PC-3 (cell line): ENCODE measurements at regions of chr10 and their contacts with region 1.

Region 1: GRCh38 chr10:126387023-126387921 is 1.0 kb downstream of the ADAM12 start:
- DNase-seq: peak; percentile 73
- ATAC-seq: peak; percentile 71
- H3K4me3 ChIP-seq: peak overlapping the region; percentile 73
- H3K27ac ChIP-seq: peak overlapping the region; percentile 12; the same call in 1 of the 2 replicates
- H3K4me1 ChIP-seq: peaks cover 25% of the 10 kb centered on the region
- H3K27me3 ChIP-seq: no peaks in the 10 kb centered on the region
- CTCF ChIP-seq: peak; percentile 76

Region 2: DNA sequence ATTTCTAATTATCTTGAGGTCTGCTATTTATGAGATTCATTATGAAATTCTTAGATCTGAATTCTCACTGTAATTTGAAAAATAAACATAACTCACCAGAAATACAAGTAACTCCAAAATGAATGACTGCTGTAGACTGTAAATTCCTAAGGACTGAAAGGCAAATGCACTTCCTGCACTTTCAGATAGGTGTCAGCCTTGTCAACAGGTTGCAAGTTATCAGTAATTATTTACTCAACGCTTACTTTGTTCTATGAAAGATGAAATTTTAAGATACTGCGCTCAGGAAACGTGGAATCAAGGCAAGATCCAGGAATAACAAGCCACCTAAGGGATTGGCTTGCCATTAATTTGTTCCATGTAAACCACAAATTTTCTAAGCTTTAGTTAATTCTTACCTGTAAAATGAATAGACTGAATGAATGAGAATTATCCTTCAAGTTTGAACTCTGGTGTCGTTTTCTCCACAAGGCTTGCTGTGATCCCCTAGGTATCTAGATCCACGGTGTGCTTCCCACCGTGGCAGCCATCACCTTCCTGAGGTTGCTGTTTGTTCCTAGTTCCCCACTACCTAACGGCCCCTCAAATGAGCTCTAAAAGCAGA is 518.8 kb before region 1 on chr10:
- CTCF ChIA-PET with region 1: no interaction called
- POLR2A ChIA-PET with region 1: no interaction called
- intact Hi-C with region 1: loop called (anchors 5 kb)
- DNase-seq: peak; percentile 74
- ATAC-seq: peak; percentile 67
- H3K4me3 ChIP-seq: no peak overlapping the region
- H3K27ac ChIP-seq: no peak overlapping the region
- H3K4me1 ChIP-seq: no peaks in the 10 kb centered on the region
- H3K27me3 ChIP-seq: no peaks in the 10 kb centered on the region
- CTCF ChIP-seq: peak; percentile 90

Region 3: DNA sequence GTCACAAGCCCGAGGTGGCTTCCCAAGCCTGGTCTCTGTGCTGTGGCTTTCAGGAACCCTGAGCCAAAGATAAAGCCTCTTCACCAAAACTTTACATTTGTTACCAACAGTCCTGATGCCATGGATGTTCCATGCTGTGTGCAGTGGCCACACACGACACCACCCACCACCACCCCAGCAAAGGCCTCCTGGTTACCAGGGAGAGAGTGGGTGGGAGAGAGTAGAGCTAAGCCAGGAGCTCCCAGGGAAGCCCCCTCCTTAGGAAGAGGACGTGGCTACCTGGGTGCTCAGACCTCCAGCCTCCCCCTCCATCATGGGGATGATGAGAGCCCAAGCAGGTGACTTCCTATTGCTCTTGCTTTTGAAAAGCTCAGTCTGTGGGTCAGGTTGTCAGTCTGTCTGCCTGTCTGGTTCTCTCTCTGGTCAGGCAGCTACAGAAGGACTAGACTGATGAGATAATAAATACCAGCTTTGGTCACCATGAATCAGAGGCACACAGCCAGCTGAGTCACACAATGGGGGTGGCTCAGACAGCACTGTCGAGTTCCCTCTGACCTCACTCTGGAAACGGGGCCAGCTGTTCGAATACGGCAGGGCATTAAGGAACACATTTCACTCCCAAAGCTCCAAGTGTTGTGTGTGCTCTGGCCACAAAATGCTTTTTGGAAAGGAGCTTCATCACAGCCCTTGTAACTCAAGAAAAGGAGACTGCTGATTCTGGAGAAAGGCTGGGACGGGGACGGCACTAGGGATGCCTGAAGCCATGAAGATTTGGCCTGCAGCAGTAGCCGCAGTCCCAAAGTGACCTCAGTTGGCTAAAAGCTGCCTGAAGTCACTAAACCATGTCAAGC is 324.9 kb before region 1 on chr10:
- CTCF ChIA-PET with region 1: no interaction called
- POLR2A ChIA-PET with region 1: no interaction called
- intact Hi-C with region 1: loop called (anchors 10 kb)
- DNase-seq: peak; percentile 95
- ATAC-seq: peak; percentile 66
- H3K4me3 ChIP-seq: peak overlapping the region; percentile 5; the same call in 1 of the 2 replicates
- H3K27ac ChIP-seq: peak overlapping the region; percentile 98
- H3K4me1 ChIP-seq: peaks cover 81% of the 10 kb centered on the region
- H3K27me3 ChIP-seq: no peaks in the 10 kb centered on the region
- CTCF ChIP-seq: no peak

Region 4: DNA sequence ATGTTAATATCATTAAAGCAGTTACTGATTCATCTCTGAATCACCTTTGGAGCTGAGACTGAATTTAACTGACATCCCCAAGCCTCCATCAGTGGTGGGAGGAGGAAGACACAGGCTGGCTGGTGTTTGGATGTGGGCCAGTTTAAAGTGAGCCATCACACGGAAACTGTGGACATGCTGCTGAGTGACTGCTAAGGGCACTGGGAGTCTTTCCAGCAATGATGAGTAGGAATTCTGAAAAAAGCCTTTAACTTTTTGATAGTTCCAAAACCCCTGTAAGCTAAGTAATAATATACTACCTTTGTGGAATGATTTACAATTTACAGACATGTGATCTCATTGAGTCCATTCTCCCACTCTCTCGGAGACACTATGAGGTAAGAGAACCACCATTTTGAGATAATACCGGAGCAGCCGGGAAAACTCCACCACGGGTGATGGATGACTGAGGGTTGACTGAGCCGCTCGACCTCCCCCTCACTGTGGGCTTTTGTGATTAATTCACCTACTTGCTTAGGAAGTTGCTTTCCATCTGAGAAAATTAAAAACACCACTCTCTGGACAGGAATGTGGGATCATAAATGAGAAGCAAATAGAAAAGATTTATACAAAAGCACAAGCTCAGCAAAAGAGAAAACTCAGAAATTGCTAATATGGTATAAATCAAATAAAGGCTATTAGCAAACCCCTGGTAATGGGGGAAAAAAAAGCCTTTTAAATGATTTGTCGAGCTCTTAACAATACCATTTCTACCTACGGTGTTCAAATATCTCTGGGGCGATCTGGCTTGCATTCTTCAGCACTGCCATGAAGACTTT is 296.2 kb before region 1 on chr10:
- CTCF ChIA-PET with region 1: no interaction called
- POLR2A ChIA-PET with region 1: no interaction called
- intact Hi-C with region 1: loop called (anchors 5 kb)
- DNase-seq: peak; percentile 94
- ATAC-seq: peak; percentile 88
- H3K4me3 ChIP-seq: peak overlapping the region; percentile 36; the same call in 1 of the 2 replicates
- H3K27ac ChIP-seq: peak overlapping the region; percentile 98
- H3K4me1 ChIP-seq: peaks cover 56% of the 10 kb centered on the region
- H3K27me3 ChIP-seq: no peaks in the 10 kb centered on the region
- CTCF ChIP-seq: no peak

Region 5: GRCh38 chr10:126302826-126303665 is 84.2 kb before region 1 on chr10:
- CTCF ChIA-PET with region 1: no interaction called
- POLR2A ChIA-PET with region 1: no interaction called
- intact Hi-C with region 1: loop called (anchors 5 kb)
- DNase-seq: peak; percentile 4
- ATAC-seq: peak; percentile 38; the same call in 1 of the 2 replicates
- H3K4me3 ChIP-seq: no peak overlapping the region
- H3K27ac ChIP-seq: no peak overlapping the region
- H3K4me1 ChIP-seq: no peaks in the 10 kb centered on the region
- H3K27me3 ChIP-seq: no peaks in the 10 kb centered on the region
- CTCF ChIP-seq: peak; percentile 41

Region 6: DNA sequence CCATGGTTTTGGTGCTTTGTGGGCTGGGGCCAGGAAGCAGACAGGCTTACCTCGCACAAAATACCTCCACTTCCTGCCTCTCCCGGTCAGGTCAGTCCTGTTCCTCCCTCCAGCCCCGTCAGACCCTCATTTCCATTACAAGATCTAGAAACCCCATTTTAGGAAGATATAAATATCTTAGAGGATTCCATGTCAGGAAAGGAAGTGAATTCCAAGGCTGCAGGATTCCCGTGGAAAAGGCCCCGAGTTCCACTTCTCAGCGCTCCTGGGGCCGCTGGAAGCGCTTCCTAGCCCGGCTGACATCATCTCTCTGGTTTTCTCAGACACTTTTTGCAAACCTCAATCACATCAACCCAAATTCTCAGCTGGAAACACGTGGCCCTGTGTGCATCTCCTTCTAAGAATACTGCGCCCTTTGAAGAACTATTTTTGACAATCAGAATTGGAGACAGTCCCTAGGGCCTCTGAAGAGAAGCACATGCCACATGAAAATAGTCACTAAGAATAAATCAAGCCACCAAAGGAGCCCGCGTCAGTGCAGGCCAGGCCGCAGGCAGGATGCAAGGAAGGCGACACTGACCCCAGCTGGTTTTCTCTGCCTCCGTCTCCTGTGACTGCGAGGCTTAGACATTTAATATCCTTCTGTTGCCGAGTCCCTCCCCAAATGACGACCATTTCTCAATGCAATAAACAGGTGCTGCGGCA is 88.8 kb after region 1 on chr10:
- CTCF ChIA-PET with region 1: no interaction called
- POLR2A ChIA-PET with region 1: no interaction called
- intact Hi-C with region 1: no loop called
- DNase-seq: no peak
- ATAC-seq: no peak
- H3K4me3 ChIP-seq: no peak overlapping the region
- H3K27ac ChIP-seq: no peak overlapping the region
- H3K4me1 ChIP-seq: peaks cover 5% of the 10 kb centered on the region
- H3K27me3 ChIP-seq: no peaks in the 10 kb centered on the region
- CTCF ChIP-seq: no peak

Region 7: GRCh38 chr10:126504063-126504739 is 116.9 kb after region 1 on chr10:
- CTCF ChIA-PET with region 1: interaction called, 3 read pairs
- POLR2A ChIA-PET with region 1: no interaction called
- intact Hi-C with region 1: loop called (anchors 2 kb)
- DNase-seq: peak; percentile 84
- ATAC-seq: peak; percentile 85
- H3K4me3 ChIP-seq: peak overlapping the region; percentile 33; the same call in 1 of the 2 replicates
- H3K27ac ChIP-seq: no peak overlapping the region
- H3K4me1 ChIP-seq: peaks cover 8% of the 10 kb centered on the region; the same call in 1 of the 2 replicates
- H3K27me3 ChIP-seq: no peaks in the 10 kb centered on the region
- CTCF ChIP-seq: peak; percentile 78

Region 8: DNA sequence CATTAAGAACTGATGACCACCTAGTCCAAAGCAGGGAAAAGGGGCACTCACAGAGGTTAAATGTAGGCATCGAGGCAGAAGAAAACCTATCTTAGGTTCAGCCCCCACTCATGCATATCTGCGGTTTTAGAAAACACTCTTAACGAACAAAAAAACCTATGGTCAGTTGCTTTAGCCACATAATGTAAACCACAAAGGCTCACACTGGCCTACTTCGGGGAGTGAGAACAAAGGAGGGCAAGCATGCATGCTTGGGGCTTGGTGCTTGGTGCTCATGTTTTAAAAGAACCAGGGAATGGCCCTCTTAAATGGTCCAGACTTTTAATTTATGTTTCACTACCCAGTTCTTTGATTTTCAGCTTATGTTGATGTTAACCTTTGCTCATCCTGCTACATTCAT is 794.9 kb after region 1 on chr10:
- CTCF ChIA-PET with region 1: no interaction called
- POLR2A ChIA-PET with region 1: no interaction called
- intact Hi-C with region 1: no loop called
- DNase-seq: no peak
- ATAC-seq: no peak
- H3K4me3 ChIP-seq: no peak overlapping the region
- H3K27ac ChIP-seq: no peak overlapping the region
- H3K4me1 ChIP-seq: no peaks in the 10 kb centered on the region
- H3K27me3 ChIP-seq: no peaks in the 10 kb centered on the region
- CTCF ChIP-seq: no peak